Cardiac septum (tissue), 1 donor: ENCODE measurements at regions of chr19 and their contacts with region 1.

Region 1: GRCh38 chr19:40662921-40663694 is 27.3 kb downstream of the NUMBL start:
- DNase-seq: peak; percentile 96

Region 2: GRCh38 chr19:40365613-40366401 is 297.3 kb before region 1 on chr19:
- intact Hi-C with region 1: no loop called
- DNase-seq: no peak

Region 3: DNA sequence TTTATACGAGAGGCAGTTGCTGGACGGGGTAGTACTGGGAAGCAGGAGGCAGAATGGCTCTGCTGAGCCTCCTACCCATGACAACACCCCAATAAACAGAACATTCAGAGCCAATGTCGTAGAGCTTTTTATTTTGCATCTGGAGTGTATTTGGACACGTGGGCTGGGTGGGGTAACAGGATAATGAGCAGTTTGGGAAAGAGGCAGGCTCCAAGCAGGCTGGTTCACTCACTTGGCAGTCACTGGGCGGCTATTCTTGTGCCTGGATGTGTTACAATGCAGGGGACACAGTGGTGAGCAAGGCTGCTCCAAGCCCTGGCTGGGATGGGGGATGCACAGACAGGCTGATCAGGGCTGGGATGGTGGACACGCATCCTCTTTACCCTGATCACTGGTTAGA is 77.6 kb after region 1 on chr19:
- intact Hi-C with region 1: no loop called
- DNase-seq: no peak

Region 4: DNA sequence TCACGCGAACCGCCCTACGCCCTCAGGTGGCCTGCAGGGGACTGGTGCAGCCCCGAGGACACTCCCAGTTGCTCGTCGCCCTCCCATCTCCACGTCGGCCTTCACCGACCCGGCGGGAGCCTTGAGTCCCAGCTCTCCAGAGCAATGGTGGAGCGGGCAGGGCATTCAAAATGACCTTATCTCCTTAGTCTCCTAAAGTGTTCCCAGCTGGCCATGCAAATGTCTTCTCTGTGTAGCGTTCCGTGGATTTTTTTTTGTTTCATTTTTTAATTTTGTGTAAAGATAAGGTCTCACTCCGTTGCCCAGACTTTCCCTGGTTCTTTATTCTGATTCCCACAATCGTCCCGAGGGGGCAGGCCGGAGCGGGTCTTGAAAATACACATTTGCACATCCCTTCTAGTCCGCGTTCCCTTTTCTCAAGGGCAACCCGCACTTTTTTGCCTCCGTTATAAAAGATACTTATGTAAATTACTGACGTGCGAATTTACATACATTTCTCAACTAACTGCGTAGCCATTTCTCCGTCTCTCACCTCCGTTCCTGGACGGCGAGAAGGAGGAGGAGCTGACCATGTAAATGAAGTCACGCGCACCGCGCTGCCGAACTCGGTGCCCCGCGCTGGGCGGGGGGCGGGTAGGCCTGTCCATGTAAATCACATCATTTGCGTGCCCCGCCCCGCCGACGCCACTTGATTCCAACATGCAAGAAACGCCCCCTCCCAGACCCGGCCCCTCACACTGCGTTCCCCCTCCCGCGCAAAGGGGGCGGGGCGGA is 135.3 kb after region 1 on chr19:
- intact Hi-C with region 1: loop called (anchors 2 kb)
- DNase-seq: peak; percentile 100

Region 5: DNA sequence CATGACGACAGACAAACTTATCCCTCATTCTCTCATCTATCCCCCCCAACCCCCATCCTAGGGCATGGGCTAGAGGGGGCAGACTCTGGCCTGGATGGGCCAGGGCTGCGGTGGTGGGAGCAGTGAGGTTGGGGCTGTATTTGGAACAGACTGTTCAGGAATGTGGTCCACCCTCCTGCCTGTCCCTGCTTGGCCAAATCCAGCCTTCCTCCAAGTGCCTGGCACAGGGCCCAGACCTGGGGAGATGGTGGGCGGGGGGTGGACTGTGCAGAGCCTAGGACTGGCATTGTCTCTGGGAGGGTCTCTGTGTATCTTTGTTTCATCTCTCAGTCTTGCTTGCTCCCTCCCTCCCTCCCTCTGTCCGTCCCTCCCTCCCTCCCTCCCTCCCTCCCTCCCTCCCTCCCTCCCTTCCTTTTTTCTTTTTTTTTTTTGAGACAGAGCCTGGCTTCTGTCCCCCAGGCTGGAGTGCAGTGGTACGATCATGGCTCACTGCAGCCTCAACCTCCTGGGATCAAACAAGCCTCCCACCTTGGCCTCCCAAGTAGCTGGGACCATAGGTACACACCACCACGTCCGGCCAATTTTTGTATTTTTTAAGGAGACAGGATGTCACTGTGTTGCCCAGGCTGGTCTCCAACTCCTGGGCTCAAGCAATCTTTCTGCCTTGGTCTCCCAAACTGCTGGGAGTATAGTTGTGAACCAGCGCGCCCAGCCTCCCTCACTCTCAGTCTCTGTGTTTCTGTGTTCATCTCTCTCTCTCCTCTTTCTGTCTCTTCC is 150.3 kb after region 1 on chr19:
- intact Hi-C with region 1: loop called (anchors 2 kb)
- DNase-seq: no peak

Region 6: GRCh38 chr19:40908976-40909375 is 245.9 kb after region 1 on chr19:
- intact Hi-C with region 1: loop called (anchors 10 kb)
- DNase-seq: no peak